Ovary (tissue), 10 donors: ENCODE measurements at regions of chr5 and their contacts with region 1.

Region 1: DNA sequence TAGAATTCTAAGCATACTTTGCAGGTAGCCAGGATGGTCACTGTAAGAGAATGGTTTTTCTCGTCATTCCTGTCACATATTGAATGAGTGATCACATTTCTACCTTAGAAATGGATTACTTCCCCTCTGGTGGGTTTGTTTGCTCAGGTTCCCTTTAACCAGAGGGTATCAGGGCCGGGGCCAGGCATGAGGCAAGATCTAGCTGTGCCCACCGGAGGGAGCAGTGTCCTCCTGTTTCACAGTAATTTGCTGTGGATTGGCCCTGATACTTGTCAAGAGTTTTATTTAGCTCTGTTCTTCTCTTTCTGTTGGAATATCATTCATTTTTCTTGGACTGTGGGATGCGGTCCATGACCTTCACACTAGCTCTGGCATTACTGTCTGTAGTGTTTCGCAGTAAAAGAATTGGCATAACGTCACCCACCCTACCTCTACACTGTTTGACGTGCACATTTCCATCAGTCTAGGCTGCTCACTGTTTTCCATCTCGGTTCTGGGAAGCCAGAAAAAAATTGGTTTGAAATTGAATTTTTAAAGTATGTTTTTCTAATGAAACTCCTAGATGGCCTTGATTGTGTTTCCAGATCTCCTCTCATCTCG is 42.4 kb upstream of the ZBED3 start:
- DNase-seq: peak in 3 of 5 donors; percentile 17 to 44 (median 25)
- H3K4me3 ChIP-seq: no peak overlapping the region
- H3K27ac ChIP-seq: no peak overlapping the region
- H3K4me1 ChIP-seq: no peaks in the 10 kb centered on the region
- H3K27me3 ChIP-seq: no peaks in the 10 kb centered on the region
- CTCF ChIP-seq: no peak
- EP300 ChIP-seq: no peak
- POLR2A ChIP-seq: no peak

Region 2: DNA sequence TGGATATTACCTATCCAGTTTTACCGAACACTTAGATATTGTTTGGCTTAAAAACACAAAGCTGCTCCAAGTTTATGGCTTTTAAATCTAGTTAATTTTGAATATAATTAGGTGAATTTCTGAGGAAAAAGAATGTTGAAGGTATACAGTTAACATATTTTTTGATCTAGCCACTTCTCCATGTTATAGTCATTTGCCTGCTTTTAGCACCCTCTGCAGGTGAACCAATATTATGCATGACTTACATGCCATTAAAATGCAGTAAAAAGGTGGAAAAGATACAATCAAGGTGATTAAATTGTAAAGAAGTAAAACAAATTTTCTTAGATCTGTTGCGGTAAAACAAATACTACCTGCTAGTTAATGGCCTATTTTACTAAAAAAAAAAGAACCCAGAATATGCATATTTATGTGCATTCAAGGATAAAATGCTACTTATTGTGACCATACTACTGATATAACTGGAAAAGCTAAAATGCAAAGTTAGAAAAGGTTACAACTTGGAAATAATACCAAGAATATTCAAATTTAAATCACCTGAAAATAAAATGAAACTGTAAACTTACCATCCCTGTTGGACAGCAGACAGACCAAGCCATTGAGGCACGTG is 1032.9 kb after region 1 on chr5:
- intact Hi-C with region 1: loop called in 1 of 4 experiments (anchors 10 kb)
- DNase-seq: no peak
- H3K4me3 ChIP-seq: no peak overlapping the region
- H3K27ac ChIP-seq: no peak overlapping the region
- H3K4me1 ChIP-seq: no peaks in the 10 kb centered on the region
- H3K27me3 ChIP-seq: no peaks in the 10 kb centered on the region
- CTCF ChIP-seq: no peak
- EP300 ChIP-seq: no peak
- POLR2A ChIP-seq: no peak